ENCODE measurements at regions of chr3 and their contacts with region 1.

Region 1: GRCh38 chr3:119034256-119035013 is at the start of gene IGSF11:
- DNase-seq: peak; percentile 77
- H3K4me3 ChIP-seq: peak within 1 kb of the TSS; percentile 58 to 74 (median 66)
- H3K27ac ChIP-seq: peak within 1 kb of the TSS; percentile 69 to 79 (median 71)
- H3K4me1 ChIP-seq: peaks cover 0 to 6% (median 3%) of the 10 kb centered on the region in 4 donors
- H3K27me3 ChIP-seq: peaks cover 0 to 15% (median 8%) of the 10 kb centered on the region in 3 donors
- CTCF ChIP-seq: peak in 2 of 4 experiments; percentile 7 to 67
- EP300 ChIP-seq: no peak
- POLR2A ChIP-seq: peak in 1 of 2 donors; percentile 31
- total RNA-seq, gene IGSF11: 8.1 to 18.2 (median 10.3) TPM

Region 2: GRCh38 chr3:118884748-118885206 is 149.7 kb before region 1 on chr3:
- intact Hi-C with region 1: loop called (anchors 1 kb)
- DNase-seq: no peak
- H3K4me3 ChIP-seq: no peak overlapping the region
- H3K27ac ChIP-seq: no peak overlapping the region
- H3K4me1 ChIP-seq: no peaks in the 10 kb centered on the region
- H3K27me3 ChIP-seq: no peaks in the 10 kb centered on the region
- CTCF ChIP-seq: peak; percentile 69 to 87 (median 84)
- EP300 ChIP-seq: no peak
- POLR2A ChIP-seq: no peak

Region 3: GRCh38 chr3:118968111-118968510 is 66.3 kb before region 1 on chr3:
- intact Hi-C with region 1: loop called (anchors 5 kb)
- DNase-seq: no peak
- H3K4me3 ChIP-seq: no peak overlapping the region
- H3K27ac ChIP-seq: peak overlapping the region in 1 of 4 donors; percentile 57
- H3K4me1 ChIP-seq: peaks cover 0 to 25% (median 16%) of the 10 kb centered on the region in 4 donors
- H3K27me3 ChIP-seq: no peaks in the 10 kb centered on the region
- CTCF ChIP-seq: no peak
- EP300 ChIP-seq: no peak
- POLR2A ChIP-seq: no peak

Region 4: GRCh38 chr3:119098619-119099222 is 64.3 kb after region 1 on chr3:
- intact Hi-C with region 1: loop called (anchors 2 kb)
- DNase-seq: no peak
- H3K4me3 ChIP-seq: no peak overlapping the region
- H3K27ac ChIP-seq: no peak overlapping the region
- H3K4me1 ChIP-seq: no peaks in the 10 kb centered on the region
- H3K27me3 ChIP-seq: no peaks in the 10 kb centered on the region
- CTCF ChIP-seq: peak; percentile 36 to 63 (median 40)
- EP300 ChIP-seq: no peak
- POLR2A ChIP-seq: no peak

Region 5: DNA sequence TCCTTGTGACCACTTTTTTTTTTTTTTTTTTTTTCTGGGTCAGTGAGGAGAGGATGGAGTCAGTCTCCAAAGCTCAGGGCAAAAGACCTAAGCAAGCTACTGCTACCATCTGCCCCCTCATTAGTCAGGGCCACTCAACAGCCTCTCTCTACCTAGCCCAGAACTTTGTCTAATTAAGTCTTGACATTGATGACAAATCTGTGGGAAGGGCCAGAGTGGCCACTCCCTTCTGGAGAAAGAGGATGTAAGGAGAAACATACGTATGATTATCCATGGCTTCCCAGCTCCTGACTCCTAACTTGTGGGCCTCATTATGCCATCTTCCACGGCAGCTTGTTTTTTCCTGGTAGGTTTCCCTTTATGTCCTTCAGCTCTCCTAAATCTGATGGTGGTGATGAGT is 785.4 kb after region 1 on chr3:
- intact Hi-C with region 1: no loop called
- DNase-seq: no peak
- H3K4me3 ChIP-seq: no peak overlapping the region
- H3K27ac ChIP-seq: no peak overlapping the region
- H3K4me1 ChIP-seq: no peaks in the 10 kb centered on the region
- H3K27me3 ChIP-seq: no peaks in the 10 kb centered on the region
- CTCF ChIP-seq: no peak
- EP300 ChIP-seq: no peak
- POLR2A ChIP-seq: no peak